ENCODE measurements at regions of chr12 and their contacts with region 1.

Region 1: GRCh38 chr12:80472902-80473500 is 29.0 kb downstream of the PTPRQ start:
- DNase-seq: no peak
- H3K4me3 Mint-ChIP-seq: no peak overlapping the region
- H3K27ac Mint-ChIP-seq: no peak overlapping the region
- H3K4me1 Mint-ChIP-seq: no peaks in the 10 kb centered on the region
- H3K27me3 Mint-ChIP-seq: no peaks in the 10 kb centered on the region

Region 2: DNA sequence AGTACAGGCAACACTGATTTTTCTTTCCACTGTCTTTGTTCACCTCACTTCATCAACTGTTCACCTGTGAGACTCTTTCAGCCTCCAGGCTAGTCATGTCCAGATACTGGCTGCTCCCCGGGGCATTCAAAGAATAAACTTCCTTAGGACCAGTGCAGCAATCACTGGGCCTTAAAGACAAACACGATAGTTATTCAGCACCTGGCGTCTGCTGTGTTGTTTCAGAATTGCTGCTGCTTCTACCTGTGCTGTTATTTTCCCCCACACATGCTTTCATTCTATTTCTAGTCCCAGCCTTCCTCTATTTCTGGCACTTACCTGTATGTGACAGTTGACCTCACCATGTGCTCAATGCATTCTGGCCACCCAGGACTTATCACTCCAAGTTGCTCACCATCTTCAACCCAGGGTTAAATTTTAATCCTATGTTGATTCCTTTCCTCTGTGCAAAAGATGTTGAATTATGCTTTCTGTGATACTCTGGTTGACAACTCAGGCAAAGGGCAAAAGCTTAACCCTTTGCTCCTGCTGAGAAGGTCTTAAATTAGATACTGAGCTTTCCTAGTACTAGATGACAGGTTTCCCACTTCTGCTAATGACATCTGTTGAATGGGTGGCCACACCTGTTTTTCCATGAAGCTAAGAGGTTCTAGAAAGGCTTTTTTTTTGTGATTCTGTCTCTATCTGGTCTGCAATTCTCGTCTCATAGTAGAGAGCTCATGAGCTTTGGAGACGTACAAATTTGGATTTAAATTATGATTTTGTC is 12.4 kb after region 1 on chr12:
- intact Hi-C with region 1: loop called (anchors 1 kb)
- DNase-seq: no peak
- H3K4me3 Mint-ChIP-seq: no peak overlapping the region
- H3K27ac Mint-ChIP-seq: no peak overlapping the region
- H3K4me1 Mint-ChIP-seq: no peaks in the 10 kb centered on the region
- H3K27me3 Mint-ChIP-seq: no peaks in the 10 kb centered on the region